CD8-positive, alpha-beta memory T cell (primary cell): ENCODE measurements at regions of chr1 and their contacts with region 1.

Region 1: GRCh38 chr1:205791568-205792180 is 16.4 kb upstream of the RAB29 start:
- DNase-seq: peak; percentile 38 to 72 (median 41)
- H3K4me3 ChIP-seq: no peak overlapping the region
- H3K4me3 Mint-ChIP-seq: no peak overlapping the region
- H3K27ac ChIP-seq: no peak overlapping the region
- H3K27ac Mint-ChIP-seq: peak overlapping the region in 2 of 8 donors; percentile 58 to 70
- H3K4me1 ChIP-seq: no peaks in the 10 kb centered on the region
- H3K4me1 Mint-ChIP-seq: no peaks in the 10 kb centered on the region
- H3K27me3 ChIP-seq: no peaks in the 10 kb centered on the region
- H3K27me3 Mint-ChIP-seq: no peaks in the 10 kb centered on the region

Region 2: GRCh38 chr1:205919026-205919746 is 127.5 kb after region 1 on chr1:
- CTCF ChIA-PET with region 1: interaction called, 13 read pairs
- POLR2A ChIA-PET with region 1: no interaction called
- DNase-seq: peak; percentile 22 to 69 (median 46)
- H3K4me3 ChIP-seq: no peak overlapping the region
- H3K4me3 Mint-ChIP-seq: no peak overlapping the region
- H3K27ac ChIP-seq: no peak overlapping the region
- H3K27ac Mint-ChIP-seq: no peak overlapping the region
- H3K4me1 ChIP-seq: no peaks in the 10 kb centered on the region
- H3K4me1 Mint-ChIP-seq: no peaks in the 10 kb centered on the region
- H3K27me3 ChIP-seq: no peaks in the 10 kb centered on the region
- H3K27me3 Mint-ChIP-seq: peaks cover 5 to 21% of the 10 kb centered on the region in 2 donors

Region 3: GRCh38 chr1:205967555-205968335 is 176.1 kb after region 1 on chr1:
- CTCF ChIA-PET with region 1: interaction called, 10 read pairs
- POLR2A ChIA-PET with region 1: no interaction called
- DNase-seq: no peak
- H3K4me3 ChIP-seq: no peak overlapping the region
- H3K4me3 Mint-ChIP-seq: no peak overlapping the region
- H3K27ac ChIP-seq: no peak overlapping the region
- H3K27ac Mint-ChIP-seq: no peak overlapping the region
- H3K4me1 ChIP-seq: no peaks in the 10 kb centered on the region
- H3K4me1 Mint-ChIP-seq: no peaks in the 10 kb centered on the region
- H3K27me3 ChIP-seq: no peaks in the 10 kb centered on the region
- H3K27me3 Mint-ChIP-seq: no peaks in the 10 kb centered on the region